ENCODE measurements at regions of chr5 and their contacts with region 1.

Region 1: DNA sequence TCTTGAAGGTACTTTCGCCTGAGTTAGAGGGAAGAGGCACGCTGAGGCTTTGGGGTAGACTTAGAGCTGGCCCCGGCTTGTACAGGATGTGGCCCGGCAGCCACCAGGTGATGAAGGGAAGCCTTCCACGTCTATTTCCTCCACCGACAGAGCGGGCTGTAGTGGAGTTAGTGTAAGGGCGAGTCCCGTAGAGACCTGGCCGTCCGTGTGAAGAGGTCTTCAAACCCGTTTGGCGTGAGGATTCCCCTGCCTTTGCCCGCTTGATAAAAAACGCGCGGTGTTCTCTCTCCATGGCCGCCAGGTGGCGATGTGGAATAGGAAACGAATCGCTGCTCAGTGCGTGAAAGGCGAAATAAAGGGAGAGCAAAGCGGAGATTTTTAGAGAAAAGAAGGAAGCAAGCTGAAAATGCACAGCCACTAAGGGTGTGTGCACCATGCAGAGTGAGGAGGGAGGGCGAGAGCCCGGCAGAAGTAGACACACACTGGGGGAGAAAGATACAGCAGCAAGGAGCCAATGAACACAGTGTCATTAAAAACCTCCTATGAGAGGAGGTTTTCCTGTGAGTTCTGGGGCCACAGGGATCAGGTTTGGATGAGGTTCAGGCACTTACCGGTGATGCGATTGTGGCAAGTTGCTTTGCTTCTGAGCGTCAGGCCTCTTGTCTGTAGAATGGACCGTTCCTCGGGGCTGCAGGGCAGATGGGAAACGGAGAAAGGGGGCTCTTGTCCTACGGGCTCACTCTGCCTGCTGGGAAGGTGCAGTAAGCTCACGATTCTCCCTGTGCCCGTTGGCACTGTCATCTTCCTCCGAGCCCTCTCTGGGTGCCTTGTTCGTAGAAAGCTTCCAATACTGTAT is 34.2 kb downstream of the STC2 start:
- DNase-seq: no peak

Region 2: GRCh38 chr5:173069671-173070070 is 224.4 kb before region 1 on chr5:
- intact Hi-C with region 1: no loop called
- DNase-seq: no peak

Region 3: DNA sequence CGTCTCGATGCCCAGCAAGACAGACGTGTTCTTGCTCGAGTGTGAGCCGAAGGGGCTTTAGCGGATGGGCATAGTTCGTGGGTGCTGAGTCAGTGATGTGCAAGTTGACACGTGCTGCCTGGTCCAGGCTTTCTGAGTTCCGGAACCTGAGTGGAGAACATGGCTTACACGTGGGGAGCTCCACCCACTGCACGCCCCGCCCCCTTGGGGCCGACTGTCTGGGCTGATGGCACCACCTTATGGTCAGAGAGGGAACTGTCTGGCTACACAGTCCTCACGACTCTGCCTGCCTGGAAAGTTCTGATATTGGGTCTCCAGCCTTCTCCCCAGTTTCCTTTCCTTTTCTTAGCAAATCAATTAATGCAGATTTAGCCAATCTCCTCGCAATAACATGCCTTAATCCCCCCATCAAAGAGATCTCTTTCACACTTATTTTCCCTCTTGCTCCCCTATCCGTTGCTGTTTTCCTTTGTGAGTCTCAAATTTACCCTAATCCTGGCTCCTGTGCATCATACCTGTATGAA is 38.0 kb after region 1 on chr5:
- intact Hi-C with region 1: loop called (anchors 1 kb)
- DNase-seq: peak; percentile 88

Region 4: GRCh38 chr5:173573126-173573960 is 279.3 kb after region 1 on chr5:
- intact Hi-C with region 1: loop called (anchors 2 kb)
- DNase-seq: peak; percentile 93